H1 (cell line): ENCODE measurements at regions of chr18 and their contacts with region 1.

Region 1: DNA sequence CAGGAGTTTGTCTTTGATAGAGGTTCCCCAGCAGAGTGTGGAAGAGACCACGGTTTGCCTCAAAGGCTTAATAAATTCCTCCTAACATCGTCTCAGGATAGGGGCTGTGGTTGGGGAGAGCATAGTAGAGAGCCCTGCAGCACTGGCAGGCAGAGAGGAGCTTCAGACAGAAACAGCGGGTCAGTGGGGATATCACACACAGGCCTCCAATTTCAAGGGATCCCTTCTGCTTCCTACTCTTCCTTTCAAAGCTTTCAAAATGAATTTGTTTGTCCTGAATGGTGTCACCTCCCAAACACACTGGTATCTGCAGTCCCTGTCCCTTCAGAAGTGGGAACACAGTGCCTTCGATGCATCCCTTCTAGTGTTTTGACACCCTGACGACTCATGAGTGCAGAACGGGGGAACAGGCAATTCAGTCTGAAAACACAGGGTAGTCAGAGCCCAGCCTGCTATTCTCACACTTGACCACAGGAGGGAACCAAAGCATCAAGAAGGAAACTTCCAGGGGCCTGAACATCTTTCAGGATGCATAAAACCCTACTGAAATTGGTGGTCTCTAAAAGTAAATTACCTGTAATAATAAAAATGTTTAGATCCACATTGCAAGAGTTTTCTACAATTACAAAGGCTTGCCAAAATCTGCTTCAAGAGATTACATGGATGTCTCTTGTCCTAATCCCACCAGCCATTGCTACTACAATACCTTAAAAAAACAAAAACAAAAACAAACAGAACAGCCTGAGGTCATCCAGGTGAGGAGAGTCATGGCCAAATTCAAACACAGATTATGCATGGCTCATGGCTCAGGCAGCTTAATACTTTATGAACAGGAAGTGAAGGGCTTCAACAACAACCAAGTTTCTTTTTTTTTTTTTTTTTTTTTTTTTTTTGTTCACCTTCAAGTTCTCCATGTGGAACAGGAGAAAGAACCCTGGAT is 49.8 kb downstream of the SLC14A2 start:
- DNase-seq: peak; percentile 27 to 70
- H3K4me3 ChIP-seq: no peak overlapping the region
- H3K27ac ChIP-seq: no peak overlapping the region
- H3K4me1 ChIP-seq: peaks cover 0 to 13% (median 3%) of the 10 kb centered on the region in 4 experiments; a peak in 6 of 7 replicates
- H3K27me3 ChIP-seq: no peaks in the 10 kb centered on the region
- CTCF ChIP-seq: peak; percentile 52 to 89 (median 87)
- EP300 ChIP-seq: no peak
- POLR2A ChIP-seq: no peak
- RAD21 ChIP-seq: peak; percentile 95

Region 2: GRCh38 chr18:45642238-45642637 is 22.9 kb before region 1 on chr18:
- CTCF ChIA-PET with region 1: interaction called, 14 read pairs
- POLR2A ChIA-PET with region 1: no interaction called
- DNase-seq: no peak
- H3K4me3 ChIP-seq: no peak overlapping the region
- H3K27ac ChIP-seq: no peak overlapping the region
- H3K4me1 ChIP-seq: no peaks in the 10 kb centered on the region
- H3K27me3 ChIP-seq: no peaks in the 10 kb centered on the region
- CTCF ChIP-seq: no peak
- EP300 ChIP-seq: no peak
- POLR2A ChIP-seq: no peak
- RAD21 ChIP-seq: no peak

Region 3: GRCh38 chr18:45684341-45685115 is 19.4 kb after region 1 on chr18:
- CTCF ChIA-PET with region 1: interaction called, 83 read pairs
- POLR2A ChIA-PET with region 1: no interaction called
- DNase-seq: no peak
- H3K4me3 ChIP-seq: no peak overlapping the region
- H3K27ac ChIP-seq: no peak overlapping the region
- H3K4me1 ChIP-seq: peaks cover 3 to 10% (median 9%) of the 10 kb centered on the region in 4 experiments
- H3K27me3 ChIP-seq: no peaks in the 10 kb centered on the region
- CTCF ChIP-seq: no peak
- EP300 ChIP-seq: no peak
- POLR2A ChIP-seq: no peak
- RAD21 ChIP-seq: no peak

Region 4: DNA sequence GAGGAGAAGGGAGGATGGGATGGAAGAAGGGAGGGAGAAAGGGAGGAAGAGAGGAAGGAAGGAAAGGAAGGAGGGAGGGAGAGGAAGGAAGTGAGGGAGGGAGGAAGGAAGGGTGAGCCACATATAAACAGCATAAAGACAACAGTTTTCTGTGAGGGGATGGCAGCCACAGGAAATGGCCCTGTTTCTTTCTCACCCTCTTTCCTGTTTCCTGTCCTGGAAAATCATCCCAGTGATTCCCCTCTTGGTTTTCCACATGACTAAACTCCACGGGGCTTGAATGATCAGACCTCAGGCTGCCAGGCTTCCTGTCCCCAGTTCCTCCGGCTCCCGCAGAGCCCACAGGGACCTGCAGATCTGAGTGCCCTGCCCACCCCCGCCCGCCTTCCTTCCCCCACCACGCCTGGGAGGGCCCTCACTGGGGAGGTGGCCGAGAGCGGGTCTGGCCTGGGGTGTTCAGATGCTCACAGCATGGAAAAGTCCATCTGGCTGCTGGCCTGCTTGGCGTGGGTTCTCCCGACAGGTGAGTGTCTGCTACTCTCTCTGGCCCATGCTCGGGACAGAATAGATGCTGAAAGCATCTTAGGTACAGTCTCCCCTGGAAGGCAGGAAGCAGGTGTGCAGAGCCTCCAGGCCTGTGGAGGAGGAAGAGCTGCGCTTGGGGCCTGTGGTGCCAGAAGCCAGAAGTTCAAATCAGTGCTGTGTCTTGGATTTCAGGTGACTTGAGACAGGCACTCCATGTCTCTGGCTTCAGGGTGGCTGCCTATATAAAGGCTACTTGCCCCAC is 160.4 kb after region 1 on chr18 and contains the start of gene SIGLEC15:
- CTCF ChIA-PET with region 1: no interaction called
- POLR2A ChIA-PET with region 1: no interaction called
- DNase-seq: peak in 1 of 2 experiments; percentile 48
- H3K4me3 ChIP-seq: no peak within 1 kb of the TSS
- H3K27ac ChIP-seq: no peak within 1 kb of the TSS
- H3K4me1 ChIP-seq: peaks cover 0 to 20% (median 6%) of the 10 kb centered on the region in 4 experiments; a peak in 6 of 7 replicates
- H3K27me3 ChIP-seq: no peaks in the 10 kb centered on the region
- CTCF ChIP-seq: no peak
- EP300 ChIP-seq: no peak
- POLR2A ChIP-seq: no peak
- RAD21 ChIP-seq: no peak
- total RNA-seq, gene SIGLEC15: 0.37 and 0.54 TPM in 2 replicates

Region 5: DNA sequence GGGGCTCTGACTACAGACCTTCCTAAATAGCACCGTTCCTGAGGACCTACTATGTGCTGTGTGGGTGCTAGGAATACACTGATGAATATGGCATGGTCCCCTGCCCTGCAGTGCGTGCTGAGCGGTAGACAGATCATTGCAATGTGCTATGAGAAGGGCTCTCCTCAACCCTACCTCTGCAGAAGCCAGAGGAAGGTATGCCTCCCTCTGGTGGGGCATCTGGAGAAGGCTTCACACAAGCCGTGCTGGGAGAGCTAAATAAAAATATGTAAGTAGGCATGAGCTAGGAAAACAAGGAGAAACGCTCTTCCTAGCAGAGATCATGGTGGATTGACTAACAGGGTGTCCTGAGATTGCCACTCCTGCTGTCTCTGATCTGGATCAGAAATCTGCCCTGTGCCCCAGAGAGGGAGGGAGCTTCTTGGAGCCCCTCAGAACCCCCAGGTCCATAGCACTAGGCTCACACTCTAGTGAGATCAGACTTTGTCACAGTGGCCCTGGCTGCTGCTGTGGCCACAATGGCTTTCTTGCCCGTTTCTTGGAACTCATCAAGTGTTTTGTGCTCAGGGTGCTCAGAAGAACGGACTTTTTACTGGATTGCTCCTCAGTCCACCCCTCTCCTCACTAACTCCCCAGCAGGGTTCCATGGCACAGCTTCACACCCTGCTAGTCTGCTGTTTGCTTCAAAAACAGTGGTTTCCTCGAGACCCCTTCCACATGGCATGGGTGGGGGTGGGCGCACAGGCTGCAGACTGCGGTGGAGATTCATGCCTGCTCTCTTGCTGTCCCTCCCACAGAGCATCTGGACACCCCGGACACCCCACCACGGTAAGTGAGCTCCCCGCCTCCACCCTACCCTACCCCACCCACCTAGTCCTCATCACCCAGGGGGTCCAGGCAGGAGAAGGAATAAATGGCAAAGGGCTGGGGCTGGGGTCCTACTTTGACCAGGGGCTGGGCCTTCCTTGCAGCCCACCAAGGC is 174.6 kb after region 1 on chr18:
- CTCF ChIA-PET with region 1: interaction called, 27 read pairs
- POLR2A ChIA-PET with region 1: no interaction called
- DNase-seq: peak in 1 of 2 experiments; percentile 52
- H3K4me3 ChIP-seq: no peak overlapping the region
- H3K27ac ChIP-seq: no peak overlapping the region
- H3K4me1 ChIP-seq: peaks cover 6 to 19% (median 10%) of the 10 kb centered on the region in 4 experiments
- H3K27me3 ChIP-seq: peaks cover 8 to 32% (median 25%) of the 10 kb centered on the region in 4 experiments
- CTCF ChIP-seq: peak; percentile 50 to 79 (median 78)
- EP300 ChIP-seq: no peak
- POLR2A ChIP-seq: no peak
- RAD21 ChIP-seq: peak; percentile 80 to 83

Region 6: GRCh38 chr18:45896991-45897390 is 231.9 kb after region 1 on chr18:
- CTCF ChIA-PET with region 1: interaction called, 11 read pairs
- POLR2A ChIA-PET with region 1: no interaction called
- DNase-seq: no peak
- H3K4me3 ChIP-seq: no peak overlapping the region
- H3K27ac ChIP-seq: no peak overlapping the region
- H3K4me1 ChIP-seq: no peaks in the 10 kb centered on the region
- H3K27me3 ChIP-seq: no peaks in the 10 kb centered on the region
- CTCF ChIP-seq: no peak
- EP300 ChIP-seq: no peak
- POLR2A ChIP-seq: no peak
- RAD21 ChIP-seq: no peak